ENCODE measurements at regions of chr20 and their contacts with region 1.

Region 1: DNA sequence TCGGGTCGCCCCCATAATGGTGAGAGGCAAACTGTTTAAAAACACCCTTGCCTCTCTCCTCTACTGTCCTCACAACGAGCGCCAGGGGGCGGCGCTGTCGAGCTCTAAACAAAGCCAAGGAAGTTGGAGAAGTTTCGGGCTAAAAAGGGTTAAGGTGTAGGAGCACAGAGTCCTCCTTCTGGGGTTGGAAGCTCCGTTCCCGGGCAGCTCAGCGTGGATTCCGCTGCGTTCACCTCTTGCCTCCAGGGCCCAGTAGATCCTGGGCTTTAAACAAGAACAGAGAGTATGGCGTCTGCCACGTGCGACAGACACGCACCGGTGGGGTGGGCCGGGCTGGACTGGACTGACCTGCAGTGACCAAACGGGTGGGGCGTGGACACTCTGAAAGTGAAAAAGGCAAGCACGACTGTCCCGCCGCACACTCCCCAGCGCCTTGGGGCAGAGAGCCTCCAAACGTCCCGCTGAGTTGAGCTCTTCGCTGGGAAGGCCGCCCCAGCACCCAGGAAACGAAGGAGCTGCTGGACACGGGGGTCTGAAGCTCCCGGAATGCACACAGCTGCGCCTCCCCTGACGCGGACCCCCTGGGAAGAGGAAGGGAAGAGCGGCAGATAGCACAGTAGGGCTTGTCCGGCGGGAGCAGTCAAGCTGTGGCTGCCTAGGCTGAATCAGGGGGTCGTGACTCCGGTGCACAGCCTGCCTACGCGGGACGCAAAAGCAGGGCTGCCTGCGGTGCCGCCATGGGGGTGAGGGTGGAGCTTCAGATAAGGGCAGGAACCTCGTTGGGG is 1.6 kb upstream of the THBD start:
- DNase-seq: peak; percentile 78 to 98
- H3K4me3 ChIP-seq: peak overlapping the region; percentile 47 to 71 (median 61)
- H3K27ac ChIP-seq: no peak overlapping the region
- H3K4me1 ChIP-seq: peaks cover 4 to 12% (median 6%) of the 10 kb centered on the region in 4 experiments; a peak in 6 of 7 replicates
- H3K27me3 ChIP-seq: peaks cover 31 to 61% (median 50%) of the 10 kb centered on the region in 4 experiments
- CTCF ChIP-seq: peak; percentile 68 to 90 (median 85)
- EP300 ChIP-seq: no peak
- POLR2A ChIP-seq: no peak
- RAD21 ChIP-seq: peak; percentile 81 to 86

Region 2: GRCh38 chr20:22924031-22924737 is 126.9 kb before region 1 on chr20:
- CTCF ChIA-PET with region 1: no interaction called
- POLR2A ChIA-PET with region 1: no interaction called
- DNase-seq: no peak
- H3K4me3 ChIP-seq: no peak overlapping the region
- H3K27ac ChIP-seq: no peak overlapping the region
- H3K4me1 ChIP-seq: no peaks in the 10 kb centered on the region
- H3K27me3 ChIP-seq: no peaks in the 10 kb centered on the region
- CTCF ChIP-seq: no peak
- EP300 ChIP-seq: no peak
- POLR2A ChIP-seq: no peak
- RAD21 ChIP-seq: no peak

Region 3: DNA sequence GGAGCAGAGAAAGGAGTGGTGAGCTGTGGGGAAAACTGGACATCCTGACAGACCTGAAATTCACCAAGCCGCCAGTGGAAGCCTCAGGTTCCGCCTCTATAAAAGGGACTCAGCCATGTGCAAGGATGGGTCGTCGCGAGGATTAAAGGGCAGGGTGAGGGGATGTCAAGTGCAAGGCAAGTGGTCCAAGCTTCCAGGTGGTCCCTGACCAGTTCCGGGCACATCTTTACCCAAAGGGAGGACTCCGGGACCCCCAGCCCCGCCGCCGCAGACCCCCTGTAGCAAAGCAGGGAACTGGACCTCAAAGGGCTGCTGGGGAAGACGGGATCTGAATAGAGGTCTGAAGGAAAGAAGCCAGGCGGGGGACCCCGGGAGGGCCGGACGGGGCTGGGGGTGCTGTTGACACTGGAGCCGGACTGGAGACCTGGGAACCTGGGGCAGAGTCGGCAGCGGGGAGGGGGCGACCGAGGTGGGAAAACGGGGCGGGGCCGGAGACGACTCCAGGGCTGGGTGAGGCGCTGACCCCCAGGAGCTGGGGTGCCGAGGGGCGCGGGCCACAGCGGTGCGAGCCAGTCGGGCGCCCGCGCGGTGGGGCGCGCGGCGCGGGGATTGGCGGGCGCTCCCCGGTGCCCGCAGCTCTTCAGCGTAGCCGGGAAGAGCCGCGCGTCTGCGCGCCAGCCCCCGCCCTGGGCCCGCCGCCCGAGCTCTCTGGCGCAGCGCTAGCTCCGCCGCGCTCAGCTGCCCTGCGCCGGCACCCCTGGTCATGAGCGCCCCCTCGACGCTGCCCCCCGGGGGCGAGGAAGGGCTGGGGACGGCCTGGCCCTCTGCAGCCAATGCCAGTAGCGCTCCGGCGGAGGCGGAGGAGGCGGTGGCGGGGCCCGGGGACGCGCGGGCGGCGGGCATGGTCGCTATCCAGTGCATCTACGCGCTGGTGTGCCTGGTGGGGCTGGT is 16.0 kb before region 1 on chr20 and contains the start of gene SSTR4:
- CTCF ChIA-PET with region 1: interaction called, 17 read pairs
- POLR2A ChIA-PET with region 1: interaction called, 5 read pairs
- DNase-seq: peak in 1 of 2 experiments; percentile 63
- H3K4me3 ChIP-seq: peak within 1 kb of the TSS; percentile 19 to 63 (median 26); a peak in 7 of 8 replicates
- H3K27ac ChIP-seq: no peak within 1 kb of the TSS
- H3K4me1 ChIP-seq: peaks cover 0 to 3% (median 0%) of the 10 kb centered on the region in 4 experiments; a peak in 1 of 7 replicates
- H3K27me3 ChIP-seq: peaks cover 21 to 66% (median 50%) of the 10 kb centered on the region in 4 experiments
- CTCF ChIP-seq: no peak
- EP300 ChIP-seq: no peak
- POLR2A ChIP-seq: no peak
- RAD21 ChIP-seq: no peak
- total RNA-seq, gene SSTR4: not detected in 2 replicates

Region 4: DNA sequence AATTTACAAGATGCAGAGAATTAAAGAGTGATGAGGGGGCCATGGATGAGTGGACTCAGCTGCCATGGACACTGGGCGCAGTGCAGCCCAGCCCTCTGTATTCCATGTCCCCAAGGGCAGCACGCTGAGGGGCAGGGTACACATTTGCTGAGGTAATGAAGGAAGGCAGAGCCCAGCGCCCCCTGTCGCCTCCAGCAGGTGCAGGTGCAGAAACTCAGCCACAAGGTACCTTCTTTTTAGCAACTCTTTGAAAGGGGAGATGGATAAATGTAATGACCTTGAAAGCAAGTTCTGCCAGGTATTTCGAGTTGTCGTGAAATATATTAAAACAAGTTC is 27.9 kb after region 1 on chr20:
- CTCF ChIA-PET with region 1: interaction called, 11 read pairs
- POLR2A ChIA-PET with region 1: no interaction called
- DNase-seq: peak; percentile 19 to 70
- H3K4me3 ChIP-seq: no peak overlapping the region
- H3K27ac ChIP-seq: no peak overlapping the region
- H3K4me1 ChIP-seq: peaks cover 0 to 7% (median 0%) of the 10 kb centered on the region in 4 experiments; a peak in 1 of 7 replicates
- H3K27me3 ChIP-seq: no peaks in the 10 kb centered on the region
- CTCF ChIP-seq: peak; percentile 68 to 90 (median 88)
- EP300 ChIP-seq: no peak
- POLR2A ChIP-seq: no peak
- RAD21 ChIP-seq: peak; percentile 52 to 63

Region 5: DNA sequence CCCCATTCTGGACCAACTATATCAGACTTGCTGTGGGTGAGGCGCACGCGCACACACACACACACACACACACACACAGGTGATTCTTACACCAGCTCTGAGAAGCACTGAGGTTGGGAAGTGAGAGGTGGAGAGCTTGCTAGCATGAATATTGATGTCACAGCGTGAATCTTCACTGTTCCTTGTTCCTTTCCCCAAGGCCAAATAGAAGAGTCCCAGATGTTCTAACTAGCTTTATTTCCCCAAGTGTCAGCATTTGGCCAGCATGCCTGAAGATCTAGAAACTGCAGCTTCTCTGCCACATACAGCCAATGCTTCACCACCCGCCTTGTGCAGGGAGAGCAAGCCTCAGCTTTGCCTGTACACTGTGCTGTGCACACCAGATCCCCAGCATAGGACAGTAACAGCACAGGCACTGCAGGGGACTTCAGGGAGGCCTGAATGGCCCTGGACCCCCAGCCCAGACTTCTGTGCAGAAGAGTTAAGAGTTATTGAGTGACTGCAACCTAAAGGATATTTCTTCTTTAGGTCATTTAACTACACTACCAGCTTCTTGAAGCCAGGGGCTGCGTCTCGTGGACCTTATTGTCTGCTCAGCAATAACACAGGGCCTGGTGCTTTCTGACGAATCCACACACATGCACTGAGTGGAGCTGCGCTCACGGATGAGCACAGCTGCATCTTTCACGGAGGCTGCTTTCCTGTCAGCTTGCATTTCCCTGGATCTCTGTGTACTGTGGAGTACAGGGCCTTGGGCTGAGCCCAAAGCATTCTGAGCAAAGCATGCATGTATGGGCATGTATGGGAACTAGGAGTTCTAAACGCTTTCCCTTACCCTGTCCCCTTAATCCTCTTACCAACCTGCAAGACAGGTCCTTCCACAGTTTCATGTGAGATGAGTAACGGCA is 49.0 kb after region 1 on chr20:
- CTCF ChIA-PET with region 1: interaction called, 11 read pairs
- POLR2A ChIA-PET with region 1: no interaction called
- DNase-seq: no peak
- H3K4me3 ChIP-seq: no peak overlapping the region; a peak in 2 of 8 replicates
- H3K27ac ChIP-seq: no peak overlapping the region
- H3K4me1 ChIP-seq: no peaks in the 10 kb centered on the region
- H3K27me3 ChIP-seq: no peaks in the 10 kb centered on the region
- CTCF ChIP-seq: no peak
- EP300 ChIP-seq: no peak
- POLR2A ChIP-seq: no peak
- RAD21 ChIP-seq: no peak

Region 6: GRCh38 chr20:23200918-23201317 is 149.9 kb after region 1 on chr20:
- CTCF ChIA-PET with region 1: interaction called, 47 read pairs
- POLR2A ChIA-PET with region 1: interaction called, 3 read pairs
- DNase-seq: peak; percentile 34 to 70
- H3K4me3 ChIP-seq: no peak overlapping the region
- H3K27ac ChIP-seq: no peak overlapping the region
- H3K4me1 ChIP-seq: peaks cover 9 to 14% (median 10%) of the 10 kb centered on the region in 4 experiments
- H3K27me3 ChIP-seq: peaks cover 0 to 2% (median 0%) of the 10 kb centered on the region in 4 experiments; a peak in 2 of 7 replicates
- CTCF ChIP-seq: peak; percentile 79 to 84 (median 84)
- EP300 ChIP-seq: peak in 1 of 2 experiments; percentile 28; a peak in 1 of 3 replicates
- POLR2A ChIP-seq: no peak
- RAD21 ChIP-seq: peak; percentile 90 to 93